Ovary (tissue), 10 donors: ENCODE measurements at regions of chr2 and their contacts with region 1.

Region 1: GRCh38 chr2:229921892-229922445 is at the start of gene TRIP12:
- DNase-seq: peak; percentile 92 to 95 (median 93)
- H3K4me3 ChIP-seq: peak within 1 kb of the TSS; percentile 82
- H3K27ac ChIP-seq: peak within 1 kb of the TSS; percentile 83 to 93
- H3K4me1 ChIP-seq: peaks cover 5% of the 10 kb centered on the region
- H3K27me3 ChIP-seq: no peaks in the 10 kb centered on the region
- CTCF ChIP-seq: no peak
- EP300 ChIP-seq: no peak
- POLR2A ChIP-seq: peak; percentile 25
- total RNA-seq, gene TRIP12: 134 to 221 (median 202) TPM

Region 2: GRCh38 chr2:229800997-229801754 is 120.8 kb before region 1 on chr2:
- intact Hi-C with region 1: loop called in 2 of 4 experiments (anchors 10 kb)
- DNase-seq: peak; percentile 40 to 60 (median 57)
- H3K4me3 ChIP-seq: no peak overlapping the region
- H3K27ac ChIP-seq: no peak overlapping the region
- H3K4me1 ChIP-seq: peaks cover 5% of the 10 kb centered on the region
- H3K27me3 ChIP-seq: no peaks in the 10 kb centered on the region
- CTCF ChIP-seq: peak in 2 of 3 donors; percentile 18 to 51
- EP300 ChIP-seq: no peak
- POLR2A ChIP-seq: no peak

Region 3: GRCh38 chr2:230007931-230008707 is 86.2 kb after region 1 on chr2:
- intact Hi-C with region 1: no loop called
- DNase-seq: peak; percentile 73 to 88 (median 87)
- H3K4me3 ChIP-seq: no peak overlapping the region
- H3K27ac ChIP-seq: no peak overlapping the region
- H3K4me1 ChIP-seq: peaks cover 10% of the 10 kb centered on the region
- H3K27me3 ChIP-seq: no peaks in the 10 kb centered on the region
- CTCF ChIP-seq: peak; percentile 75 to 85 (median 77)
- EP300 ChIP-seq: no peak
- POLR2A ChIP-seq: no peak